ENCODE measurements at regions of chr14 and their contacts with region 1.

Region 1: DNA sequence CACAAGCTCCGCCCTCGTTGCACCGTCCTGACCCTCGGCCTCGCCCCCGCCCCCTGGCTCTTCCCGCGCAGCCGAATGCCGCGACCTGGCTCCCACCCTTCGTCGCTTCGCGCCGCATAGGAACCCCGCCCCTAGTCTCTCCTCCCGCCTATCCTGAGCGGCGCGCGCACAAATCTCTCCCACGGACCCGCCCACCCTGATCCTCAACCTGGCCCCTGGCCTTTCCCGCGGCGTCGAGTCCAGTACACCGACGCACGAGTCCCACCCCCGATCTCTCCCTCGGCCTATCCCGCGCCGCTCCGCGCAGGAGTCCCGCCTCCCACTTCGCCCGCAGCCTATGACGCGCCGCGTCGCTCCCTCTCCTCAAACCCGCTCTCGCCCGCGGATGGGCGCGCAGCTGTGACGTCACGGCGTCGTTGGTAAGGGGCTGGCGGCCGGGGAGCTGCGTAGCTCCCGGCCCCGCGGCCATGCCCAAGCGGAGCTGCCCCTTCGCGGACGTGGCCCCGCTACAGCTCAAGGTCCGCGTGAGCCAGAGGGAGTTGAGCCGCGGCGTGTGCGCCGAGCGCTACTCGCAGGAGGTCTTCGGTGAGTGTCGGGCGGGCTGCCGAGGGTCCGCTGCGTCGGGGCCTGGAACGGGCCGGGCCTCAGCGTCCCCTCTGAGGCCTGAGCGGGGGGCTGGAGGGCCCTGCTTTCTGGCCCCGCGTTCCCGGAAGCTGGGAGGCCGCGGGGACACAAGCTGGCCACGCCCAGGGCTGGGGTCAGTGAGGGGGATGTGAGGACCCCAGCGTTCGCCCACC is at the start of gene SIVA1:
- DNase-seq: peak; percentile 100
- ATAC-seq: peak; percentile 95
- H3K4me3 Mint-ChIP-seq: peak within 1 kb of the TSS; percentile 95
- H3K27ac Mint-ChIP-seq: peak within 1 kb of the TSS; percentile 77
- H3K4me1 Mint-ChIP-seq: peaks cover 11% of the 10 kb centered on the region
- H3K27me3 Mint-ChIP-seq: peaks cover 14% of the 10 kb centered on the region
- CTCF ChIP-seq: no peak
- total RNA-seq, gene SIVA1: 113 to 128 TPM (median 124 TPM) in 3 replicates

Region 2: DNA sequence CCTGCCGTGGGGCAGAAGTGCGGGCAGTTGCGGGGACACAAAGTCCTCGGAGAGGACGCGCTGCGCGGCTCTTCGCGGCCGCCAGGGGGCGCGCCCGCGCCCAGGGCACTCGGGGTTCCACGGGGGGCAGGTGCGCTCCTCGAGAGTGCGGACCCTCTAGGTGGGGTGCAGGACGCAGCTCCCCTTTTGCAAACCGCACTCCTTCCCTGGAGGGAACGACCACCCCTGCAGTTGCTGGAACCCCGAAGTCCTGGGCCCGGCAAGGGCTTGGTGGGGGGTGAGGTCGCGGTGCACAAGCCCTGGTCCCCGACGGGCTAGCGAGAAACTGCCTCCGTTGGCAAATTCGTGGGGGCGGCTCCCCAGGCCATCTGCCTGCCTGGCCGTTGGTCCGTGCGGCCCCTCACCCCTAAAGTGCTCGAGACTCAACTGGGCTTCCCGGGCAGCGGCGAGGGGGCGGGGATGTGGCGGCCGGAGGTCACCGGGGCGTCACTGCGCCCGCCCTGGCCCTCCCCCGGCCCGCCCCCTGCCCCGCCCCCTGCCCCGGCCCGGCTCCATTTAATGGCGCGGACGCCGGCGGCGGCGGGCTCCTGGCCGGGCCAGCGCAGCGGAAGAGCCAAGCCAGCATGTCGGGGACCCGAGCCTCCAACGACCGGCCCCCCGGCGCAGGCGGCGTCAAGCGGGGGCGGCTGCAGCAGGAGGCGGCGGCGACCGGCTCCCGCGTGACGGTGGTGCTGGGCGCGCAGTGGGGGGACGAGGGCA is 29.1 kb before region 1 on chr14 and contains the start of gene ADSS1:
- CTCF ChIA-PET with region 1: interaction called, 12 read pairs
- POLR2A ChIA-PET with region 1: no interaction called
- DNase-seq: peak; percentile 66
- ATAC-seq: peak; percentile 51
- H3K4me3 Mint-ChIP-seq: peak within 1 kb of the TSS; percentile 69
- H3K27ac Mint-ChIP-seq: no peak within 1 kb of the TSS
- H3K4me1 Mint-ChIP-seq: peaks cover 5% of the 10 kb centered on the region
- H3K27me3 Mint-ChIP-seq: peaks cover 2% of the 10 kb centered on the region; the same call in 1 of the 2 replicates
- CTCF ChIP-seq: peak; percentile 99
- total RNA-seq, gene ADSS1: 10.0 to 13.3 TPM (median 12.0 TPM) in 3 replicates

Region 3: GRCh38 chr14:104731249-104731924 is 21.5 kb before region 1 on chr14:
- CTCF ChIA-PET with region 1: interaction called, 17 read pairs
- POLR2A ChIA-PET with region 1: no interaction called
- DNase-seq: peak; percentile 54
- ATAC-seq: peak; percentile 89
- H3K4me3 Mint-ChIP-seq: no peak overlapping the region
- H3K27ac Mint-ChIP-seq: no peak overlapping the region; the same call in 1 of the 2 replicates
- H3K4me1 Mint-ChIP-seq: no peaks in the 10 kb centered on the region
- H3K27me3 Mint-ChIP-seq: peaks cover 3% of the 10 kb centered on the region; the same call in 1 of the 2 replicates
- CTCF ChIP-seq: peak; percentile 41; the same call in 1 of the 2 replicates

Region 4: DNA sequence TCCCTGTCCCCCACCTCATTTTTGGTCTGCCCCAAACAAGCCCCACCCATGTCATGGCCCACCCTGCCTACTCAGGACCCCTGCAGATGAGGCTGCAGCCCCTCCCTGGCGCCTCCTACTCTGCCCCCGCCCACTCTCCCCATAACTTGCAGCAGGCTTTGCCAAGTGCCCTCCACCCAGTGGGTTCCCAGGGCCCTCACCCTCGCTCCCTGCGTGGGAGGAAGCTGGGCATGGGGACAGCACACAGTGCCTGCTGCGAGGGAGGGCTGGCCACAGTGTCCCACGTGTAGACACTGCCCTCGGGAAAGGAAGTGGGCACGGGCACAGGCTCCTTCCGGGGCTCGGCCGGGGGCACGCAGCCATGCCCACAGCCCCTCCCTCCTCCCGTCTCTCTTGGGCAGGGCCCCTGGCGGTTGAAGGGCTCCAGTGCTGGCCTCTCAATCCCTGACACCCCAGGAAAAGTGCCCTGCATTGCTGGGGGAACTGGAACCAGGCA is 33.2 kb after region 1 on chr14:
- CTCF ChIA-PET with region 1: no interaction called
- POLR2A ChIA-PET with region 1: no interaction called
- DNase-seq: no peak
- ATAC-seq: no peak
- H3K4me3 Mint-ChIP-seq: no peak overlapping the region
- H3K27ac Mint-ChIP-seq: no peak overlapping the region
- H3K4me1 Mint-ChIP-seq: no peaks in the 10 kb centered on the region
- H3K27me3 Mint-ChIP-seq: no peaks in the 10 kb centered on the region
- CTCF ChIP-seq: no peak

Measured in WTC11 (cell line).